Endothelial cell of umbilical vein (primary cell): ENCODE measurements at regions of chr9 and their contacts with region 1.

Region 1: DNA sequence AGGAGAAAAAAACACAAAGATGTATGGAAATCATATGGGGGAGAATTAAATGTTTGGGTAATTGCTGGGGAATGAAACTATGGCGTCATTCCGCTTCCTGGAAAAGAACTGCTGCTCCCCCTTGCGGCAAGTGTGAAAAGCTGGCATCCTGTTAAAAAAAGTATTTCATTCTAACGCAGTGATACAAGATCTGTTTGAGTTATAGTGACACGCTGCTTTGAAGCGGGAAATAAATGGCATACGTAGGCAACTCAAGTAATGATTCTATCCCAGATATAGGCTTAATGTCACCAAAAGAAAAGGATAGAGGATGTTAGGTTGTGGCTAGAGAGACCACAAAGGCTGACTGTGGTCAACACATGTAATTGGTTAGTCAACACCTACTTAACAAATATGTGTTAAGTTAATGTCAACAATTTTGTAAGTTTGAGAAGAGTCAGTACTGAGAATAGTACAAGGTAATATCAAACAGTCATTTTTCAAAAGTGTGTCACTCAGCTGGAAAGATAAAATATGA is 70.2 kb upstream of the ALDH1A1 start:
- DNase-seq: peak; percentile 80
- H3K4me3 ChIP-seq: no peak overlapping the region
- H3K27ac ChIP-seq: peak overlapping the region; percentile 59
- H3K4me1 ChIP-seq: peaks cover 20% of the 10 kb centered on the region
- H3K27me3 ChIP-seq: no peaks in the 10 kb centered on the region
- CTCF ChIP-seq: peak; percentile 65 to 75
- POLR2A ChIP-seq: no peak

Region 2: DNA sequence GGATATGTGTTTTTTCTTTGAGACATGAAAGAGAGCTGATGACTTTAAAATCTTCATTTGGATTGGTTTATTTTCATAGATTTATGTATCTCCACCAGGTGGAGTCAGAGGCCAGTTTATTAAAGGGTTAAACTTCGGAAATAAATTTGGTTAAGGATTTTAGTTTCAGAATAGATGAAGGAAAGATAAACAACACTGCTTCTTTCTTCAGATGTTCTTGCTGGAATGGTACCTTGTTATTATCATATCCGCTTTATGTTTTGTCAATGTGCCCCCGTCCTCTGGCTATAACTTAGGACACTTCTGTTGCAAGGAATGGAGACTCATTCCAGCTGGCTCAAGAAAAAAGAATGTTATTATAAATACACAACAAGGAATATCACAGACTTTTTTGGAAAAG is 151.4 kb before region 1 on chr9:
- CTCF ChIA-PET with region 1: interaction called, 201 read pairs
- POLR2A ChIA-PET with region 1: no interaction called
- dilution Hi-C with region 1: no loop called
- intact Hi-C with region 1: loop called (anchors 1 kb)
- DNase-seq: peak; percentile 62
- H3K4me3 ChIP-seq: no peak overlapping the region
- H3K27ac ChIP-seq: peak overlapping the region; percentile 50
- H3K4me1 ChIP-seq: peaks cover 5% of the 10 kb centered on the region
- H3K27me3 ChIP-seq: no peaks in the 10 kb centered on the region
- CTCF ChIP-seq: peak; percentile 20 to 29
- POLR2A ChIP-seq: no peak

Region 3: DNA sequence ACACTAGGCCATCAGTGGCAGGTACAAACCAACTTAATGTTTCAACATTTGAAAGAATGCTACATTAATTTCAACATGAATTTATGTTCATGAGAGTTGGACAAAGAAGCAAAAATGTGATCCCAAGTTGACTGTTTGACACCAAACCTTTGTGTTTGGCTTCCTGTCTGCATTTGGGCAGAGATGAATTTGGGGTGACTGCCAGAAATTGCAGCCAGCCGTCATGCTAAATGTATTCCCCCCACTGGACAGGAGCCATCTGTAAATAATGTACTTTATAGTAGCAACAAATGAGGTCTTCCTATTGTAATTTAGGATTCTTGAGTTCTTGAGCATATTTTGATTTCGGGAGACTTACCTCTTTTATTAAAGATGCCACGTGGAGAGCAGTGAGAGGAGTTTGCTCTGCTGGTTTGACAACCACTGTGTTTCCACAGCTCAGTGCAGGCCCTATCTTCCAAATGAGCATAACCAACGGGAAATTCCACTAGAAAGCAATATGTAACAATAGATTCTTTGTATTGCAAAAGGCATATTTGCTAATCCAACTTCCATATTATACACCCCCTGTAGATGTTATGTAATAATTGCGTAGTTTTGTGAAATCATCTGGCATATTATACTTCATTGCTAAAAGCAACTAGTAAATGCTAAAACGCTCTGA is 97.8 kb before region 1 on chr9:
- CTCF ChIA-PET with region 1: interaction called, 10 read pairs
- POLR2A ChIA-PET with region 1: no interaction called
- dilution Hi-C with region 1: no loop called
- intact Hi-C with region 1: loop called (anchors 2 kb)
- DNase-seq: peak; percentile 91
- H3K4me3 ChIP-seq: no peak overlapping the region
- H3K27ac ChIP-seq: peak overlapping the region; percentile 57
- H3K4me1 ChIP-seq: peaks cover 16% of the 10 kb centered on the region
- H3K27me3 ChIP-seq: no peaks in the 10 kb centered on the region
- CTCF ChIP-seq: no peak
- POLR2A ChIP-seq: no peak

Region 4: DNA sequence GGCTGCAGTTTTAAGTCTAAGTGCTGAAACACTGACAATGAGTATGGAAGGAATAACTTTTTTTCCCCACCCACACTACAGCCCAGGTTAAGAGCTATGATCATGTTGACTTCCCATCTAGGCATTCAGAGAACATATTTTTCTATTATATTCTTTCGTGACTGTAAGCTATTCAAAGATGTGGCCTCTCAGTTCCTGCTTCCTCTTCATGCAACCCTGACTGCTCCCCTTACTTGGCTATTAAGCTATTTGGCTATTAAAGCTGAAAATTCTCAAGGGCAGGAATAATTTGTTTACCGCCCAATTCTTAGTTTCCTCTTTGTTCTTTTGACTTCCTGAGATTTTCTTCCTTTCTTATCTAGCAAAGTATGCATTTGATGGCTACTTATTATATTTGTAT is 51.7 kb before region 1 on chr9:
- CTCF ChIA-PET with region 1: interaction called, 10 read pairs
- POLR2A ChIA-PET with region 1: no interaction called
- dilution Hi-C with region 1: no loop called
- intact Hi-C with region 1: no loop called
- DNase-seq: peak; percentile 87
- H3K4me3 ChIP-seq: no peak overlapping the region
- H3K27ac ChIP-seq: peak overlapping the region; percentile 72
- H3K4me1 ChIP-seq: peaks cover 18% of the 10 kb centered on the region
- H3K27me3 ChIP-seq: no peaks in the 10 kb centered on the region
- CTCF ChIP-seq: no peak
- POLR2A ChIP-seq: no peak

Region 5: GRCh38 chr9:73009649-73010288 is 13.3 kb before region 1 on chr9:
- CTCF ChIA-PET with region 1: interaction called, 25 read pairs
- POLR2A ChIA-PET with region 1: no interaction called
- dilution Hi-C with region 1: no loop called
- intact Hi-C with region 1: no loop called
- DNase-seq: no peak
- H3K4me3 ChIP-seq: no peak overlapping the region
- H3K27ac ChIP-seq: no peak overlapping the region
- H3K4me1 ChIP-seq: peaks cover 38% of the 10 kb centered on the region
- H3K27me3 ChIP-seq: no peaks in the 10 kb centered on the region
- CTCF ChIP-seq: no peak
- POLR2A ChIP-seq: no peak

Region 6: GRCh38 chr9:73081979-73082657 is 59.0 kb after region 1 on chr9:
- CTCF ChIA-PET with region 1: interaction called, 17 read pairs
- POLR2A ChIA-PET with region 1: no interaction called
- dilution Hi-C with region 1: no loop called
- intact Hi-C with region 1: loop called (anchors 1 kb)
- DNase-seq: peak; percentile 90
- H3K4me3 ChIP-seq: no peak overlapping the region
- H3K27ac ChIP-seq: no peak overlapping the region
- H3K4me1 ChIP-seq: peaks cover 2% of the 10 kb centered on the region
- H3K27me3 ChIP-seq: no peaks in the 10 kb centered on the region
- CTCF ChIP-seq: peak; percentile 61 to 74
- POLR2A ChIP-seq: no peak